Ovary (tissue), 10 donors: ENCODE measurements at regions of chr5 and their contacts with region 1.

Region 1: DNA sequence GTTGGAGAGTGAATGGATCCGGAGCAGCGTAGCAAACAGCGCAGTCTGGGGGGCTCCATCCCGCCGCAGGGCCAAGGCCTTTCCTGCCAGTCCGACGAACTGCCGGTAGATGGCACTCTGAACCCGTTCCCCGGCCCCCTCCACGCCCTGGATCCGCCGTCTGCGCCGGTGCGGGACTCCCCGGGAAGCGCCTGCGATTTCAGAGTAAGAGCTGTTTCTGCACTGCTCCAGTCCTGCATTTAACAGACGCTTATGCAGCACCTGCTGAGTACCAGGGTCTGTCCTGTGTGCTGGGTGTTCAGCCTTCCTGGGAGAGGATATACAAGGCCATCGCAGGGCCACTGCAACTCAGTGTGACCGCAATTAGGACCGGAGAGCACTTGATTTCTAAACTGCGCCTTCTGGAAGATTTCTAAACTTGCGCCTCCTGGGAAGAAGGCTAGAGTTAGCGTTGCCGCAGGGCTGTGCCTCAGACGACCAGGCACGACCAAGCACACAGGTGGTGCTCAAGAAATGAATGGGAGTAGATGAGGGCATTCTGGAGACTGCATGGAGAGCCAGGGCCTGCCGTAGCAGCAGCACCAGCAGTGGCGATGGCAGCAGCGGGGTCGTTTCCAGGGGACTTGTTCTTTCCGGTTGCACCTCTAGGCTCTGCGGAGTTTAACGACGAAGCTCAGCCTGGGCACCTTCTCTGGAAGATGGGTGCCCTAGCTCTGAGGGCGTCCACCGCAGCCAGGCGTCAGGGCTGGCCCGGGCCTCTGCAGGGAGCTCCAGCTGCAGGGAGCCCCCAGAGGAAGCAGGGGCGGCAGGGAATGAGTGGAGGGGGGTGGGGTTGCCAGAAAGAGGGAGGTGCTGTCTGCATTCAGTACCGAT is 14.3 kb upstream of the TIFAB start:
- DNase-seq: peak; percentile 58 to 79 (median 67)
- H3K4me3 ChIP-seq: no peak overlapping the region
- H3K27ac ChIP-seq: no peak overlapping the region
- H3K4me1 ChIP-seq: no peaks in the 10 kb centered on the region
- H3K27me3 ChIP-seq: no peaks in the 10 kb centered on the region
- CTCF ChIP-seq: peak; percentile 46 to 68 (median 52)
- EP300 ChIP-seq: no peak
- POLR2A ChIP-seq: no peak

Region 2: GRCh38 chr5:135543485-135544304 is 77.3 kb after region 1 on chr5:
- intact Hi-C with region 1: loop called in 1 of 4 experiments (anchors 10 kb)
- DNase-seq: peak in 1 of 5 donors; percentile 36
- H3K4me3 ChIP-seq: peak overlapping the region; percentile 21
- H3K27ac ChIP-seq: no peak overlapping the region
- H3K4me1 ChIP-seq: peaks cover 5% of the 10 kb centered on the region
- H3K27me3 ChIP-seq: no peaks in the 10 kb centered on the region
- CTCF ChIP-seq: no peak
- EP300 ChIP-seq: no peak
- POLR2A ChIP-seq: no peak

Region 3: DNA sequence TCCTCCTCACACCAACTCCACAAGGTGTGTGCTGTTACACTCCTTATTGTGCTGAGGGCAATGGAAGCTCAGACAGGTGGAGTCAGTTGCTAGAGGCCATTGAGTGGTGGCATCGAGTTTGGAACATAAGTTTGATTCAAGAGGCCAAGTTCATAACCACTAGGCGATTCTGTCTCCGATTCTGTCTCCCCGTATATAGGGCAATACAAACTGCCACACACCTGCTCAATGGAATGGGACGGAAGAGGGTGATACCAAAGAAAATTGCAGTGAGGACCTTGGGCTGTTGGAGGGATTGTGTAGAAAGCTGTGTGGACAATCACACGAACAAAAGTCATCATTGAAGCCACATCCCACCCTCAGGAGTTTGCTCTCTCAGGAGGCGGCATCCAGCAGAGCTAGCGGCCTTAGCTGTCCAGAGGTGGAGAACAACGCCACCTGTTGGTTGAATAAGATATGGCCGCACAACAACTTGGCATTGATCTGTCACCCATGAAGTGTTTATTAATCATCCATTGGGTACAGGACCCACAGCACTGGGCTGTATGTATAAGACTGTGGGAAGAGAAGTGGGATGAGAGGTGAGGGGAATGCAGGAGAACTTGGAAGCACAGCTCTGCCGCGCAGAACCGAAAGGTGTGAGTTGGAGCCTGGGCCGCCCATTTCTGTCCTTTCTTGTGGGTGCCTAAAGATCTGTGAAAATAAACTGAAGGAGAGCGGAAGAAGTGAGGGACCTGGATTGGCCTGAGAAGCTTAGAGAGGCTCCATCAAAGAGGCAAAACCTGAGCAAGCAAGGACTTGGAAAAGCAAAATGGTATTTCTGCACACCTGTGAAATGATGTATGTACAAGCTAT is 85.4 kb after region 1 on chr5:
- intact Hi-C with region 1: loop called (anchors 5 to 10 kb)
- DNase-seq: peak; percentile 19 to 46 (median 35)
- H3K4me3 ChIP-seq: no peak overlapping the region
- H3K27ac ChIP-seq: no peak overlapping the region
- H3K4me1 ChIP-seq: no peaks in the 10 kb centered on the region
- H3K27me3 ChIP-seq: no peaks in the 10 kb centered on the region
- CTCF ChIP-seq: peak in 1 of 3 donors; percentile 56
- EP300 ChIP-seq: no peak
- POLR2A ChIP-seq: no peak